GM10248 (cell line): ENCODE measurements at regions of chr6 and their contacts with region 1.

Region 1: GRCh38 chr6:82712852-82713251 is 349.2 kb downstream of the TPBG start:
- DNase-seq: peak; percentile 24
- CTCF ChIP-seq: peak; percentile 25

Region 2: GRCh38 chr6:82693094-82693493 is 19.8 kb before region 1 on chr6:
- CTCF ChIA-PET with region 1: interaction called, 16 read pairs
- POLR2A ChIA-PET with region 1: no interaction called
- DNase-seq: no peak
- CTCF ChIP-seq: no peak

Region 3: GRCh38 chr6:82767037-82767436 is 54.2 kb after region 1 on chr6:
- CTCF ChIA-PET with region 1: no interaction called
- POLR2A ChIA-PET with region 1: no interaction called
- DNase-seq: no peak
- CTCF ChIP-seq: no peak